ENCODE measurements at regions of chr5 and their contacts with region 1.

Region 1: DNA sequence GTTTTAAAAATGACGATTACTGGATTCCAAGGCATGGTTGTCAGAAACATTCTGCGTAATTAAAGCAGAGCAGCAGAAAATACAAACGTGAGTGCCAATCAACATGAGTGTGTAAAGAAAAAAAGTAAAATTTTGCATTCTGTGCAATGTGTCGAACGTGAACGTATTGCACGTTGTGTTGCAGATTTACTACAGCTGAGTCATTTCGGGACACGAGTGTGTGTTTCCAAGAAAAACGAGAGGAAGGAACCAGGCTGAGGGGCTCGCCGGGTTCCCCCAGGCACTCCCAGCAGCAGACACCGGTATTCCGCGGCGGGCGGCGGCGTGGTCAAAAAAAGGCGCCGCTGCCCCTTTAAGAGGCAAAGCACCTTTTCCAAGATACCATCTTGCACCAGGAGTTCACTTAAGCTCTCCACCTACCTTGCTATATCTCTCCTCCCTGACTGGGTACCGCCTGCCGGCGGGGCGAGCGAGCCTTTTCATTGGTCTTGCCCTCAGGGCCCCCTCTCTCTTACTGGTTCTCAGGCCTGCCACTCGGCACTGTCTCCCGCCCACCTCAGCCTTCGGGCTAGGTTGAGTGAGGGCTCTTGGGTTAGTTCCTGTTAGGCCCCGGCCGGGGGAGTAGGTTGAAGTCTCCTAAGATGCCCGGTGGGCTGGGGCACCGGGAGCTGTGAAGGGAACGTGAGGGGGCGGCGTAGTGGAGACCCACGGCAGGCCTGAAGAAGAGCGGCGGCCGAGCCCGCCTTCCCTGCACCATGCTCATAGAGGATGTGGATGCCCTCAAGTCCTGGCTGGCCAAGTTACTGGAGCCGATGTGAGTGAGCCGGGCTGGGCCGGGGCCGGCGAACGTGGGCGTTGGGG is at the start of gene RBM27:
- DNase-seq: peak; percentile 95 to 99 (median 98)
- ATAC-seq: peak; percentile 100
- H3K4me3 ChIP-seq: peak within 1 kb of the TSS; percentile 81
- H3K4me3 Mint-ChIP-seq: no peak within 1 kb of the TSS
- H3K27ac ChIP-seq: peak within 1 kb of the TSS; percentile 86
- H3K27ac Mint-ChIP-seq: no peak within 1 kb of the TSS
- H3K4me1 ChIP-seq: peaks cover 12 to 17% of the 10 kb centered on the region in 2 donors
- H3K4me1 Mint-ChIP-seq: peaks cover 4 to 29% (median 19%) of the 10 kb centered on the region in 7 donors
- H3K27me3 ChIP-seq: no peaks in the 10 kb centered on the region
- H3K27me3 Mint-ChIP-seq: no peaks in the 10 kb centered on the region
- total RNA-seq, gene RBM27: 19.8 to 32.2 (median 25.6) TPM

Region 2: DNA sequence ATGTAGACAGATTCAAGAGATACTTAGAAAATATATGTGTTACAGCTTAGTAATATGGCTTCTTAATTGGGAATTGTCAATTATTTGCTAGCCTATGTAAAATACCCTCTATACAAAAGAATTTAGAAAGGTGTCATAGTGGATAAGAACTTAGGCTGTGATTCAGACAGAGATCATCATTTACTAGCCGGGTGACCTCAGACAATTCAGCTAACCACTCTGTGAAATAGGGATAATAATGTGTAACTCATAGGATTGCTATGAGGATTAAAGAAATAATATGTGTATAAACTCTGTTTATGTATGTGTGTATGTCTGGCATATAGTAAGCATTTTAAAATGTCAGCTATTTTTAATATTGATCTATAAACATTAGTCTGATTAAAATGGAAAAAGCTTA is 14.9 kb before region 1 on chr5:
- CTCF ChIA-PET with region 1: interaction called, 3 read pairs
- POLR2A ChIA-PET with region 1: interaction called, 16 read pairs
- intact Hi-C with region 1: no loop called
- DNase-seq: no peak
- ATAC-seq: no peak
- H3K4me3 ChIP-seq: no peak overlapping the region
- H3K4me3 Mint-ChIP-seq: no peak overlapping the region
- H3K27ac ChIP-seq: no peak overlapping the region
- H3K27ac Mint-ChIP-seq: no peak overlapping the region
- H3K4me1 ChIP-seq: no peaks in the 10 kb centered on the region
- H3K4me1 Mint-ChIP-seq: peaks cover 0 to 10% (median 0%) of the 10 kb centered on the region in 7 donors
- H3K27me3 ChIP-seq: no peaks in the 10 kb centered on the region
- H3K27me3 Mint-ChIP-seq: peaks cover 6 to 17% (median 9%) of the 10 kb centered on the region in 5 donors

Region 3: GRCh38 chr5:146213210-146213826 is 10.1 kb after region 1 on chr5:
- CTCF ChIA-PET with region 1: no interaction called
- POLR2A ChIA-PET with region 1: interaction called, 4 read pairs
- intact Hi-C with region 1: loop called in 1 of 2 experiments (anchors 1 kb)
- DNase-seq: peak in 1 of 9 donors; percentile 18
- ATAC-seq: no peak
- H3K4me3 ChIP-seq: no peak overlapping the region
- H3K4me3 Mint-ChIP-seq: peak overlapping the region in 6 of 10 donors; percentile 19 to 56 (median 42)
- H3K27ac ChIP-seq: no peak overlapping the region
- H3K27ac Mint-ChIP-seq: no peak overlapping the region
- H3K4me1 ChIP-seq: peaks cover 13 to 21% of the 10 kb centered on the region in 2 donors
- H3K4me1 Mint-ChIP-seq: peaks cover 31 to 78% (median 59%) of the 10 kb centered on the region in 7 donors
- H3K27me3 ChIP-seq: no peaks in the 10 kb centered on the region
- H3K27me3 Mint-ChIP-seq: no peaks in the 10 kb centered on the region

Region 4: GRCh38 chr5:146446853-146447733 is 243.9 kb after region 1 on chr5 and contains the start of gene TCERG1:
- CTCF ChIA-PET with region 1: no interaction called
- POLR2A ChIA-PET with region 1: interaction called, 3 read pairs
- intact Hi-C with region 1: loop called (anchors 1 kb)
- DNase-seq: peak; percentile 87 to 99 (median 98)
- ATAC-seq: peak; percentile 94
- H3K4me3 ChIP-seq: peak within 1 kb of the TSS; percentile 64
- H3K4me3 Mint-ChIP-seq: peak within 1 kb of the TSS; percentile 83 to 100 (median 99)
- H3K27ac ChIP-seq: peak within 1 kb of the TSS; percentile 96
- H3K27ac Mint-ChIP-seq: peak within 1 kb of the TSS; percentile 91 to 100 (median 97)
- H3K4me1 ChIP-seq: peaks cover 14 to 19% of the 10 kb centered on the region in 2 donors
- H3K4me1 Mint-ChIP-seq: peaks cover 24 to 51% (median 43%) of the 10 kb centered on the region in 7 donors
- H3K27me3 ChIP-seq: no peaks in the 10 kb centered on the region
- H3K27me3 Mint-ChIP-seq: peaks cover 0 to 10% (median 0%) of the 10 kb centered on the region in 5 donors
- total RNA-seq, gene TCERG1: 75.2 to 101 (median 83.8) TPM

Measured in naive thymus-derived CD4-positive, alpha-beta T cell (primary cell).